ENCODE measurements at regions of chr1 and their contacts with region 1.

Region 1: DNA sequence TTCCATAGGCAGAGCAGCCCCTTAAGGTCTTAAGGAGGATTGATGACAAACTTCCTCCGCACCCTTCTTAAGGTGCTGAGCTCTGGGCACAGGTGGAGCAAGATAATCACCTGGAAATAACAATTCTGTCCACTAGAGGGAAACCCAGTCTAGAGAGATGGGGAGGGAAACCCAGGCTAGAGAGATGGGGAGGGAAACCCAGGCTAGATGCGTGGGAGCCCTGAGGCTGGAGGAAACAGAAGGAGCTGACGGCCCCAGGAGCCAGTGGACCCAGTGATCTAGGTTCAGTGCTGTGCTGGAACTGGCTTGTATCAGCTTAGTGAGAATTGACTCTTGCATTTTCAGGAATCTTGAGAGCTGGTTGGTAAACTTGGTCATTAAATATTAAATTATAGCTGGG is 17.8 kb upstream of the MYCL start:
- DNase-seq: peak; percentile 50
- ATAC-seq: peak; percentile 95
- H3K4me3 Mint-ChIP-seq: no peak overlapping the region
- H3K27ac Mint-ChIP-seq: no peak overlapping the region
- H3K4me1 Mint-ChIP-seq: no peaks in the 10 kb centered on the region
- H3K27me3 Mint-ChIP-seq: no peaks in the 10 kb centered on the region

Region 2: DNA sequence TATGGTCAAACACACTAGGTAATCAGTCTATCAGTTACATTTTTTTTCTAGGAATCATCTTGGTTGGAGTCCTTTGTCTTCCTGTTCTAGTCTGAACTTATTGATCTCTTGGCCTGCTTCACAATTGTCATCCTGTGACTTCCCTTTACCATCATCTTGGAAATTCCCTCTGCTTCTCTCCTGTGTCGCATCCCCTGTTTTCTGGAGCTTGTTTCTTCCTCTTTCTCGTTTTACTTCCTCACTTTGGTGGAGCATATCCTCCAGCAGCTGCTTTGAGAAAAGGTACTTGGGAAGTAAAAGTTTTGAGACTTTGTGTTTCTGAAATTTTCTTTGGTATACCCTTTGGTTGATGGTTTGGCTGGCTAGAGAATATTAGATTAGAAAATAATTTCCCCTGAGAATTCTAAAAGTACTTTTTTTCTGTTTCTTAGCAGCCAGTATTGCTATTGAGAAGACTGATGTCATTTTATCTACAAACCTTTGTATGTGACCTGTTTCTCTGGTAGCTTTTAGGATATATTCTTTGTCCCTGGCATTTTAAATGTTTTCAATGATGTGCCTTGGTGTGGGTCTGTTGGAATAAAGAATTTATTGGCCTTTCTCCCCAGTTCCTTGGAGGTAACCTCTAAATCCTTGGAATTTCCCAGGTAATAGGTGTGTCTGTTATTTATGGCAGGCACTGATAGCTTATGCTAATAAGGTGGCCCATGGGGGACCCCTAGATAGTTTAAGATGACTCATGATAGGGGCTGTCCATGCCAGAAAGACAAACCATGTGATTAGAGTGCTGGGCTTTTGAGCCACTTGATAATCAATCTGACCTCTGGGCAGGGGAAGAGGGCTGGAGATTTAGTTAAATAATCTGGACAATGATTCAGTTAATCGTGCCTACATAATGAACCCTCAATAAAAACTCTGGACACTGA is 11.8 kb before region 1 on chr1:
- CTCF ChIA-PET with region 1: interaction called, 14 read pairs
- POLR2A ChIA-PET with region 1: no interaction called
- DNase-seq: no peak
- ATAC-seq: no peak
- H3K4me3 Mint-ChIP-seq: no peak overlapping the region
- H3K27ac Mint-ChIP-seq: no peak overlapping the region
- H3K4me1 Mint-ChIP-seq: no peaks in the 10 kb centered on the region
- H3K27me3 Mint-ChIP-seq: peaks cover 28% of the 10 kb centered on the region

Region 3: GRCh38 chr1:39954816-39955546 is 35.4 kb after region 1 on chr1 and contains the start of gene MFSD2A:
- CTCF ChIA-PET with region 1: interaction called, 18 read pairs
- POLR2A ChIA-PET with region 1: no interaction called
- DNase-seq: peak; percentile 90
- ATAC-seq: peak; percentile 96
- H3K4me3 Mint-ChIP-seq: peak within 1 kb of the TSS; percentile 91
- H3K27ac Mint-ChIP-seq: peak within 1 kb of the TSS; percentile 81
- H3K4me1 Mint-ChIP-seq: peaks cover 23% of the 10 kb centered on the region
- H3K27me3 Mint-ChIP-seq: peaks cover 2% of the 10 kb centered on the region
- total RNA-seq, gene MFSD2A: 4.1 TPM

Region 4: DNA sequence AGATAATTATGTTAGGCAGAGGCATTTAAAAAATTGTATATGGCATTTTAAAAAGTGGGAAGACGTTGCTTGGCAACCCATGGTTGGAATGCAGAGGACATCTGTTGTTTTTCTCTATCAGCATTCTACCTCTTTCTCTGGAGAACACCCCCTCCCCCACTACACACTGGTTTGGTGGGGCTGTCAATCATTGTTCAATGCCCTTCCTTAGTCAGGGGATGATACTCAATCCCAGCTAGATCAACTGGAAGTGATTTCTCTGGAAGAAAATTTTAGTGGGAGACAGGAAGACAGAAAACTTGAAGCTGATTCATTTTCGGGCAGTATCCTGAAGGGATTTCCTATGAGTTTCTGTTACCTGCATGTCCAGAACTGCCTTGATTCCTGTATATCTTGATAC is 85.3 kb after region 1 on chr1:
- CTCF ChIA-PET with region 1: no interaction called
- POLR2A ChIA-PET with region 1: no interaction called
- DNase-seq: no peak
- ATAC-seq: no peak
- H3K4me3 Mint-ChIP-seq: no peak overlapping the region
- H3K27ac Mint-ChIP-seq: no peak overlapping the region
- H3K4me1 Mint-ChIP-seq: peaks cover 2% of the 10 kb centered on the region
- H3K27me3 Mint-ChIP-seq: peaks cover 4% of the 10 kb centered on the region

Region 5: DNA sequence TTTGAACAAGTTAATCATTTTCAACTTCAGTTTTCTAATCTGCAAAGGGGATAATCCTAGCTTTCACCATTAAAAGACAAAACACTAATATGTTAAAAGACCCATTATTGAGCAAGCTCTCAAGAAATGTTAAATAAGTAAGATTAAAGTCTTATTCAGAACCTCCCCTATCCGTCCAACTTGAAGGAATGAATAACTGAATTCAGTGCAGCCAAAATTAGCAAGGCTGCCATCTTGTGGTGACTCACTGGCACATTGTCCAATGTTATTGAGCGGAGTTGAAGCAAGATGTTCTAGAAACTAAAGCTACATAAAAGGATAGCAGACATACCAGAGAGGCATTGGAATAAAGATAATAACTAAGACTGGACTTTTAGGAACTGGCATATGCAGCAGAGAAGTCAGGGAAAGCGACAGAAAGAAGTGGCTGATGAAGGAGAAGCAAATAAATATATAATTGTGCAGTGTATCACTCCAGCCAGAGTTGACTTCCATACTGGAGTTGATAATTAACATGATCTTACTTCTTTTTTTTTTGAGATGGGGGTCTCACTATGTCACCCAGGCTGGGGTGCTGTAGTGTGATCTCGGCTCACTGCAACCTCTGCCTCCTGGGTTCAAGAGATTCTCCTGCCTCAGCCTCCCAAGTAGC is 112.8 kb after region 1 on chr1:
- CTCF ChIA-PET with region 1: interaction called, 150 read pairs
- POLR2A ChIA-PET with region 1: no interaction called
- DNase-seq: peak; percentile 71
- ATAC-seq: peak; percentile 77
- H3K4me3 Mint-ChIP-seq: no peak overlapping the region
- H3K27ac Mint-ChIP-seq: no peak overlapping the region
- H3K4me1 Mint-ChIP-seq: peaks cover 43% of the 10 kb centered on the region
- H3K27me3 Mint-ChIP-seq: peaks cover 9% of the 10 kb centered on the region

Region 6: GRCh38 chr1:40059338-40059959 is 139.9 kb after region 1 on chr1:
- CTCF ChIA-PET with region 1: interaction called, 12 read pairs
- POLR2A ChIA-PET with region 1: no interaction called
- DNase-seq: peak; percentile 61
- ATAC-seq: peak; percentile 76
- H3K4me3 Mint-ChIP-seq: peak overlapping the region; percentile 67
- H3K27ac Mint-ChIP-seq: peak overlapping the region; percentile 90
- H3K4me1 Mint-ChIP-seq: peaks cover 87% of the 10 kb centered on the region
- H3K27me3 Mint-ChIP-seq: no peaks in the 10 kb centered on the region